ENCODE measurements at regions of chr5 and their contacts with region 1.

Region 1: DNA sequence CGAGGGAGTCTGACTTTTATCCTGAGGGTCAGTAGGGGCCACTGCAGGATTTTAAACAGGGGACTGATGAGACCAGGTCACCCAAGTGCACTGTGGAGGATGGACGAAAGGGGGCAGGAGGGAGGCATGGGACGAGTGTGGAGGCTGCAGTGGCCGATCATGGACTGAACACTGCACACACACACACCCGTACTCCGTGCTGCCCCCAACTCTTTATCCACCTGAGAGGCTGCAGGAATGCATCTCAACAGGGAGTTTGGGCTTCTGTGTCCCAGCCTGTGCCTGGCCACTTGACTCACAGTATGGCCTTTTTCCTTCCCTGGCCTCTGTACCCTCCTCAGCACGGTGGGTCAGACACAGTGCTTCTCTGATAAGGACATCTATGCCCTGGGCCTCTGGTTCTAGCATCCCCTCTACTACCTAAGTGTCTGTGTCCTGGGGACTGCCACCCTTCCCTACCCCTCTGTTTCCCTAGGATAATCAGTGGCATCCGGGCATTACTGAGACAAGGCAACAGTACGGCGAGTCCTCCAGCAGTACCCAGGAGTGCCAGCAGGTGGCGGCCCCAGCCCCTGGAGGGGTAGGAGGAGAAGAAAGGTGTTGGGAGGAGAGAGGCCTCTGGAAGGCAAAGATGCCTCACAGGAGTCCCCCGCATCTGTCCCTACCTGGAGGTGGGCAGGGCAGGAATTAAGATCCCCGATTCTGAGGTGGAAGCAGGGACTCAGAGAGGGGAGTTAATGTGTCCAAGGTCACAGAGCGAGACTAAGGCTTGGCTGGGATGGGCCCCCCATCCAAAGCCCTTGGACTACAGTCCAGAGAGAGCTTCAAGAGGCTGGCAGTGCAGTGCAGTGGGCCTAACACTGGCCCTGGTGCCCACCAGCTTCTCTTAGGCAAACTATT is 5.1 kb upstream of the CDX1 start:
- DNase-seq: peak in 1 of 2 experiments; percentile 100
- H3K4me3 ChIP-seq: peak overlapping the region in 1 of 4 experiments; percentile 10; a peak in 1 of 8 replicates
- H3K27ac ChIP-seq: no peak overlapping the region
- H3K4me1 ChIP-seq: peaks cover 3 to 10% (median 6%) of the 10 kb centered on the region in 4 experiments
- H3K27me3 ChIP-seq: peaks cover 21 to 31% (median 26%) of the 10 kb centered on the region in 4 experiments
- CTCF ChIP-seq: peak in 2 of 3 experiments; percentile 92 to 99; a peak in 3 of 4 replicates
- EP300 ChIP-seq: no peak
- POLR2A ChIP-seq: no peak
- RAD21 ChIP-seq: peak; percentile 90 to 93

Region 2: GRCh38 chr5:150137168-150137957 is 24.1 kb before region 1 on chr5:
- CTCF ChIA-PET with region 1: interaction called, 18 read pairs
- POLR2A ChIA-PET with region 1: interaction called, 4 read pairs
- DNase-seq: no peak
- H3K4me3 ChIP-seq: no peak overlapping the region
- H3K27ac ChIP-seq: no peak overlapping the region
- H3K4me1 ChIP-seq: peaks cover 4 to 32% (median 26%) of the 10 kb centered on the region in 4 experiments
- H3K27me3 ChIP-seq: no peaks in the 10 kb centered on the region; a peak in 3 of 7 replicates
- CTCF ChIP-seq: no peak
- EP300 ChIP-seq: no peak
- POLR2A ChIP-seq: no peak
- RAD21 ChIP-seq: no peak

Region 3: DNA sequence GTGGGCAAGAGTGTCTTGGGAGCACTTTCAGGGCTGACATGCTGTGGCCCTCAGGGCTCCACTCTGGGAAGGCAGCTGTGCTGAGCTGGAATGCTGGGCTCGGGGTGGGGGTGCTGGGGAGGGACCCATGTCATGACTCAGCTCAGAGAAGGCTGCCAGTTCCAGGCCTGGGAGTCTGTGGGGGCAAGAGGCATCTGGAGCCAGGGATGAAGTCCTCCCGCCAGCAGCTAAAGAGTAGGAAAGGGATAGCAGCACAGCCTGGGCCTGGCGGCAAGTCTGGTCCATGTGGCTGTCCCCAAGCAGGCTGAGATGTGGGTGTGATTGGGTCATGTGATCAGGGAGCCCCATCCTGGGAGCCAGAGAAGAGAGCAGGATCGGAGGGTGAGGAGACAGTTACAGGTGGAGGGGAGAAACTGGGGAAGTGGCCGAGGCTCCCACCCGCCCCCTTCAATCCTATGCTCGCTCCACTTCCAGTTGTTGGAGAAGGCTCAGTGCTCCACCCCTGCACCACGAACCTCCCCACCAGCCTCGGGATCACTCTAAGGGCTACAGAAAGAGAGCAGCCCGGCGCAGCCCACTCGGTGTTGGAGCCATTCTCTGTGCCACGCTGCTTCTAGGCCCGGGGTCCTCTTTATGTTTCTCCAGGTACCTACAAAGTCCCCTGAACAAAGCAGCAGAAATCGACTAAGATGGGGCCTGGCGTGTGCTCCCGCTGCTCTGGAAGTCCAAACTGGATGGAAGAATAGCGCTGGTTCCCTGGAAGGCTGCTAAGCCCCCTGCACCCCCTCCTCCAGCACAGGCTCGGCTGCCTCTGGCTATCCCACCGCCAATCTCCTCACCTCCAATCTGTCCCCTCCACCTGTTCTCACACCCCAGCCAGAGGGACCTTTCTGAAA is 17.9 kb before region 1 on chr5:
- CTCF ChIA-PET with region 1: interaction called, 21 read pairs
- POLR2A ChIA-PET with region 1: interaction called, 4 read pairs
- DNase-seq: no peak
- H3K4me3 ChIP-seq: no peak overlapping the region
- H3K27ac ChIP-seq: no peak overlapping the region
- H3K4me1 ChIP-seq: peaks cover 4 to 23% (median 16%) of the 10 kb centered on the region in 4 experiments
- H3K27me3 ChIP-seq: no peaks in the 10 kb centered on the region; a peak in 1 of 7 replicates
- CTCF ChIP-seq: no peak
- EP300 ChIP-seq: no peak
- POLR2A ChIP-seq: no peak
- RAD21 ChIP-seq: no peak